CD4-positive, alpha-beta memory T cell (primary cell): ENCODE measurements at regions of chr17 and their contacts with region 1.

Region 1: GRCh38 chr17:40559954-40560591 is 5.2 kb downstream of the CCR7 start:
- DNase-seq: peak; percentile 77 to 84 (median 81)
- H3K4me3 ChIP-seq: peak overlapping the region; percentile 94 to 96
- H3K4me3 Mint-ChIP-seq: peak overlapping the region; percentile 88 to 98 (median 96)
- H3K27ac ChIP-seq: peak overlapping the region; percentile 94
- H3K27ac Mint-ChIP-seq: peak overlapping the region; percentile 95 to 100 (median 99)
- H3K4me1 ChIP-seq: peaks cover 82% of the 10 kb centered on the region
- H3K4me1 Mint-ChIP-seq: peaks cover 42 to 99% (median 72%) of the 10 kb centered on the region in 4 donors
- H3K27me3 ChIP-seq: no peaks in the 10 kb centered on the region
- H3K27me3 Mint-ChIP-seq: no peaks in the 10 kb centered on the region

Region 2: GRCh38 chr17:40317880-40318829 is 241.9 kb before region 1 on chr17:
- CTCF ChIA-PET with region 1: interaction called, 3 read pairs
- POLR2A ChIA-PET with region 1: interaction called, 37 read pairs
- intact Hi-C with region 1: no loop called
- DNase-seq: peak; percentile 89 to 93 (median 91)
- H3K4me3 ChIP-seq: peak overlapping the region; percentile 80 to 91
- H3K4me3 Mint-ChIP-seq: peak overlapping the region; percentile 91 to 98 (median 96)
- H3K27ac ChIP-seq: peak overlapping the region; percentile 99
- H3K27ac Mint-ChIP-seq: peak overlapping the region; percentile 96 to 100 (median 99)
- H3K4me1 ChIP-seq: peaks cover 74% of the 10 kb centered on the region
- H3K4me1 Mint-ChIP-seq: peaks cover 42 to 95% (median 61%) of the 10 kb centered on the region in 4 donors
- H3K27me3 ChIP-seq: no peaks in the 10 kb centered on the region
- H3K27me3 Mint-ChIP-seq: peaks cover 1 to 3% of the 10 kb centered on the region in 2 donors

Region 3: DNA sequence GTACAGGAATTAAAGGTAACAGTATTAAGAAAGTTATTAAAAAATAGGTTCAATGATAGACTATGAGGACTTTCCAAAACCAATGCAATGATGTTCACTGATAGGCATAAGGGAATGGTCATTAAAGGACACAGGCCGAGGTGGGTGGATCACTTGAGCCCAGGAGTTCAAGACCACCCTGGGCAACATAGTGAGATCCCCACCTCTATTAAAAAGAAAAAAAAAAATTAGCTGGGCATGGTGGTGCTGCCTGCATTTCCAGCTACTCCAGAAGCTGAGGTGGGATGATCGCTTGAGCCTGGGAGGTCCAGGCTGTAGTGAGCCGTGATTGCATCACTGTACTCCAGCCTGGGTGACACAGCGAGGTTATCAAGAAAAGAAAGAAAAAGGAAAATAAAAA is 148.3 kb before region 1 on chr17:
- CTCF ChIA-PET with region 1: interaction called, 14 read pairs
- POLR2A ChIA-PET with region 1: interaction called, 23 read pairs
- intact Hi-C with region 1: loop called (anchors 5 kb)
- DNase-seq: no peak
- H3K4me3 ChIP-seq: no peak overlapping the region
- H3K4me3 Mint-ChIP-seq: no peak overlapping the region
- H3K27ac ChIP-seq: no peak overlapping the region
- H3K27ac Mint-ChIP-seq: peak overlapping the region in 1 of 7 donors; percentile 43
- H3K4me1 ChIP-seq: peaks cover 14% of the 10 kb centered on the region
- H3K4me1 Mint-ChIP-seq: peaks cover 7 to 14% (median 9%) of the 10 kb centered on the region in 4 donors
- H3K27me3 ChIP-seq: no peaks in the 10 kb centered on the region
- H3K27me3 Mint-ChIP-seq: no peaks in the 10 kb centered on the region

Region 4: DNA sequence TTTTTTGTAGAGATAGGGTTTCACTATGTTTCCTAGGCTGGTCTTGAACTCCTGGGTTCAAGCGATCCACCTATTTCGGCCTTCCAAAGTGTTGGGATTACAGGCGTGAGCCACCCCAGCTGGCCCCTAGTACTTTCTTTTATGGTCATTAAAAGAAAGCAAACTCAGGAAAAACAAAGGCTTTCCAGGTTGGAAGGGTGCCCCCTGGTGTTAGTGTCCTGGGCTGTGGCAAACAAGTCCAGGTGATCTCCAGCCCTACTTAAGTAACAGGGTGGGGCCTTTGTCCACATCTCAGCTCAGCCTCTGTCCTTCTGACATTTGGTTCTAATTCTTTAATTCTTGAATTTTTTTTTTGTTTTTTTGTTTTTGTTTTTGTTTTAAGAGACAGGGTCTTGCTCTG is 109.9 kb before region 1 on chr17:
- CTCF ChIA-PET with region 1: interaction called, 32 read pairs
- POLR2A ChIA-PET with region 1: interaction called, 3 read pairs
- intact Hi-C with region 1: no loop called
- DNase-seq: peak in 2 of 5 donors; percentile 18 to 26
- H3K4me3 ChIP-seq: no peak overlapping the region
- H3K4me3 Mint-ChIP-seq: no peak overlapping the region
- H3K27ac ChIP-seq: no peak overlapping the region
- H3K27ac Mint-ChIP-seq: no peak overlapping the region
- H3K4me1 ChIP-seq: peaks cover 35% of the 10 kb centered on the region
- H3K4me1 Mint-ChIP-seq: peaks cover 12 to 30% (median 21%) of the 10 kb centered on the region in 4 donors
- H3K27me3 ChIP-seq: no peaks in the 10 kb centered on the region
- H3K27me3 Mint-ChIP-seq: no peaks in the 10 kb centered on the region

Region 5: GRCh38 chr17:40531051-40531991 is 28.8 kb before region 1 on chr17:
- CTCF ChIA-PET with region 1: interaction called, 512 read pairs
- POLR2A ChIA-PET with region 1: interaction called, 1,088 read pairs
- intact Hi-C with region 1: loop called (anchors 1 kb)
- DNase-seq: peak; percentile 53 to 85 (median 58)
- H3K4me3 ChIP-seq: no peak overlapping the region
- H3K4me3 Mint-ChIP-seq: peak overlapping the region in 7 of 8 donors; percentile 27 to 75 (median 37)
- H3K27ac ChIP-seq: no peak overlapping the region
- H3K27ac Mint-ChIP-seq: peak overlapping the region; percentile 78 to 100 (median 84)
- H3K4me1 ChIP-seq: peaks cover 77% of the 10 kb centered on the region
- H3K4me1 Mint-ChIP-seq: peaks cover 57 to 82% (median 65%) of the 10 kb centered on the region in 4 donors
- H3K27me3 ChIP-seq: no peaks in the 10 kb centered on the region
- H3K27me3 Mint-ChIP-seq: peaks cover 0 to 2% of the 10 kb centered on the region in 2 donors

Region 6: DNA sequence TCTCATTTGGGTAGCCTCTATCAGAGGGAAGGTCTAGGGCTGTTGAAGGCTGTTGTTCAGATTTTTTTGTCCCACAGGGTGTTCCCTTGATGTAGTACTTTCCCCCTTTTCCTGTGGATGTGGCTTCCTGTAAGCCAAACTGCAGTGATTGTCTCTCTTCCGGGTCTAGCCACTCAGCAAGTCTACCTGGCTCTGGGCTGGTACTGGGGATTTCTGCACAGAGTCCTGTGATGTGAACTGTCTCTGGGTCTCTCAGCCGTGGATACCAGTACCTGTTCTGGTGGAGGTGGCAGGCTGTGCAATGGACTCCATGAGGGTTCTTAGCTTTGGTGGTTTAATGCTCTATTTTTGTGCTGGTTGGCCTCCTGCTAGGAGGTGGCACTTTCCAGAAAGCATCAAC is 28.5 kb after region 1 on chr17:
- CTCF ChIA-PET with region 1: interaction called, 11 read pairs
- POLR2A ChIA-PET with region 1: interaction called, 166 read pairs
- intact Hi-C with region 1: no loop called
- DNase-seq: peak in 1 of 5 donors; percentile 35
- H3K4me3 ChIP-seq: peak overlapping the region in 1 of 2 donors; percentile 1
- H3K4me3 Mint-ChIP-seq: peak overlapping the region in 7 of 8 donors; percentile 36 to 86 (median 75)
- H3K27ac ChIP-seq: no peak overlapping the region
- H3K27ac Mint-ChIP-seq: peak overlapping the region in 6 of 7 donors; percentile 9 to 89 (median 77)
- H3K4me1 ChIP-seq: peaks cover 50% of the 10 kb centered on the region
- H3K4me1 Mint-ChIP-seq: peaks cover 45 to 71% (median 56%) of the 10 kb centered on the region in 4 donors
- H3K27me3 ChIP-seq: no peaks in the 10 kb centered on the region
- H3K27me3 Mint-ChIP-seq: no peaks in the 10 kb centered on the region

Region 7: GRCh38 chr17:40647624-40648383 is 87.7 kb after region 1 on chr17 and contains the start of gene SMARCE1:
- CTCF ChIA-PET with region 1: interaction called, 5 read pairs
- POLR2A ChIA-PET with region 1: interaction called, 27 read pairs
- intact Hi-C with region 1: no loop called
- DNase-seq: peak; percentile 76 to 83 (median 77)
- H3K4me3 ChIP-seq: peak within 1 kb of the TSS; percentile 82 to 92
- H3K4me3 Mint-ChIP-seq: peak within 1 kb of the TSS; percentile 88 to 98 (median 94)
- H3K27ac ChIP-seq: peak within 1 kb of the TSS; percentile 95
- H3K27ac Mint-ChIP-seq: peak within 1 kb of the TSS; percentile 98 to 100 (median 99)
- H3K4me1 ChIP-seq: peaks cover 47% of the 10 kb centered on the region
- H3K4me1 Mint-ChIP-seq: peaks cover 23 to 58% (median 37%) of the 10 kb centered on the region in 4 donors
- H3K27me3 ChIP-seq: no peaks in the 10 kb centered on the region
- H3K27me3 Mint-ChIP-seq: no peaks in the 10 kb centered on the region
- total RNA-seq, gene SMARCE1: 87.6 to 91.0 TPM